CD8-positive, alpha-beta T cell (primary cell): ENCODE measurements at regions of chr3 and their contacts with region 1.

Region 1: DNA sequence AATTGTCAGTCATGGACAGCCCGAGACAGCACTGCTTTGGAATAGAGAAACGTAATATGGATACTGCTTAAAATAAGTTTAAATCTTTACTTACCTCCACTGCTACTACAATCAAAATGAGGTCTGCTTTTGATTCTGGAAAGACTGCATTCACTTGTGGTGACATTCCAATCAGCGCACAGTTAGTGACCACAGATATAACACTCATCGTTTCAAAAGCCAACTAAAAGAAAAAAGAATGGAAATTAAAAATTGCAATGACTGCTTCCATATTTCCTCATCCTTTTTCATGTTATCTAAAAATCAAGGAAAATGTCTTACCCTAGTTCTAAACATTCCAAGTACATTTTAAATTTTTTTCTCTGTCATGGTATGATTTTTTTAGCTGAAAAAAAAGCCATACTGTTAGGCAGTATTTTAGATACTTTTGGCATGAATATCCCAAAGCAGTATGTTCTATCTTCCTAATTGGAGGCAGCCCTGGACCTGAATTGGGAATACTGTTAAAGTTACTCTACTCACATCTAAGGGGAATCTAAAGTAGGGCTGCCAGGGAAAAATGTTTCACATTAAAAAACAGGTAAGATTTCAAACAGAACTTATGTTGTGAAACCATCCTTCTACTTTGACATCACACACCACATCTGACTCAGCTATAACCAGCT is 72.1 kb downstream of the ANO10 start:
- DNase-seq: no peak
- ATAC-seq: no peak
- H3K4me3 ChIP-seq: no peak overlapping the region
- H3K4me3 Mint-ChIP-seq: no peak overlapping the region
- H3K27ac ChIP-seq: no peak overlapping the region
- H3K27ac Mint-ChIP-seq: no peak overlapping the region
- H3K4me1 ChIP-seq: no peaks in the 10 kb centered on the region
- H3K4me1 Mint-ChIP-seq: no peaks in the 10 kb centered on the region
- H3K27me3 ChIP-seq: no peaks in the 10 kb centered on the region
- H3K27me3 Mint-ChIP-seq: no peaks in the 10 kb centered on the region
- CTCF ChIP-seq: no peak

Region 2: DNA sequence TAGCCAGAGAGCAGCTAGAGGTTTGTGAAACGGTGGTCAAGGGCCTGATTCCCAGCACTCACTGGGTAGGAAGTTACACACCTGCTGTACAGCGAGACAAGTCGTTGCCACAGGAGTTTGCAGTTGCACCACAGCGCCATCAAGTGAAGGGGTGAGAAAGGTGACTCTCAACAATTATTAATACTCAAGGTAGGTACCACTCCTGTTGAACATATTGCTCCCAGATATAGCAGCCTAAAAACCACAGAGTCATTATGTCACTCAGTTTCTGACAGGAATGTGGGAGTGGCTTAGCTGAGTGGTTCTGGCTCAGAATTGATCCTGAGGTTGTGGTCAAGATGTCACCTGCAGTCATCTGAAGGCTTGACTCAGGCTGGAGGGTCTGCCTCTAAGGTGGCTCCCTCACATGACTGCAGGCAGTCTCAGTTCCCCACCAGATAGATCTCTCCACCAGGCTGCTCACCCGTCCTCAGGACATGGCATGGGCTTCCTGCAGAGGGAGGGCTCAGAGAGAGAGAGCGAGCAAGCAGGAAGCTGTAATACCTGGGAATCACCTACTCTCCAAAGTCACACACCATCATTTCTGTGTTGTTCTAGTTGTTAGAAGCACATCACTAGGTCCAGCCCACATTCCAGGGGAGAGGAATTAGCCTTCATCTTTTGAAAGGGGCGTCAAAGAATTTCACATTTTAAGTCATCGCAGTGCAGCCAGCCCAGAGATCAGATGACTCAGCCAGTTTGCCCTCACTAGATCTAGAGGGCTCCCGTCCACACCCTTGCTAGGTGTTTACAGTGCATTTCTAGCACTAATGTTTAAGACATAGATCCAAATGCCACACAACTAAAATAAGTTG is 89.1 kb after region 1 on chr3:
- CTCF ChIA-PET with region 1: interaction called, 3 read pairs
- POLR2A ChIA-PET with region 1: no interaction called
- intact Hi-C with region 1: loop called (anchors 1 to 5 kb)
- DNase-seq: peak in 5 of 9 experiments; percentile 25 to 56 (median 46)
- ATAC-seq: peak; percentile 42
- H3K4me3 ChIP-seq: no peak overlapping the region
- H3K4me3 Mint-ChIP-seq: no peak overlapping the region
- H3K27ac ChIP-seq: no peak overlapping the region
- H3K27ac Mint-ChIP-seq: no peak overlapping the region
- H3K4me1 ChIP-seq: no peaks in the 10 kb centered on the region
- H3K4me1 Mint-ChIP-seq: no peaks in the 10 kb centered on the region
- H3K27me3 ChIP-seq: peaks cover 0 to 1% of the 10 kb centered on the region in 2 experiments
- H3K27me3 Mint-ChIP-seq: peaks cover 7% of the 10 kb centered on the region
- CTCF ChIP-seq: no peak

Region 3: DNA sequence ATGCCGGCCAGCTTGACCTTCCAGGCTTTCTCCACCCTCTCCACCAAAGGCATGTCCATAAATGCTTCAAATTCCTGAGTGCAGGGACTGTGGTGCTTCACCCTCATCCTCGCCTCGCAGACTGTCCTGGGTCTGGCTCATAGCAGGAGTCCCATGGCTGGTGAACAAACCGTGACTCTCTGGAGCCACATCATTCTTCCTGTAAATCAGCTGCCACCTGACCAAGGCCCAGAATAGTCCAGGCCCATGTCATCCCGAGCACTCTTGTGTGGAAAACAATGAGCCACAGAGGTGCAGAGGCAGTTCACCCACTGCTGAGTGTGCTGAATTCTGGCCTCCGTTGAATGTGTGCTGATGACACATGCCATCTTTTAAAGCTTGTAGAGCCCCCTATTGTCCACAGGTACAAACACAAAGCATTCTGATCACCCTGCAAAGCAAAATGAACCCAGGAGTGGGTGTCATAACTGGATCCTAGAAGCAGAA is 209.6 kb after region 1 on chr3:
- CTCF ChIA-PET with region 1: interaction called, 16 read pairs
- POLR2A ChIA-PET with region 1: interaction called, 3 read pairs
- intact Hi-C with region 1: loop called (anchors 1 to 5 kb)
- DNase-seq: peak in 2 of 9 experiments; percentile 25 to 37
- ATAC-seq: peak; percentile 43
- H3K4me3 ChIP-seq: no peak overlapping the region
- H3K4me3 Mint-ChIP-seq: no peak overlapping the region
- H3K27ac ChIP-seq: no peak overlapping the region
- H3K27ac Mint-ChIP-seq: no peak overlapping the region
- H3K4me1 ChIP-seq: peaks cover 40% of the 10 kb centered on the region
- H3K4me1 Mint-ChIP-seq: peaks cover 52% of the 10 kb centered on the region
- H3K27me3 ChIP-seq: no peaks in the 10 kb centered on the region
- H3K27me3 Mint-ChIP-seq: no peaks in the 10 kb centered on the region
- CTCF ChIP-seq: no peak

Region 4: DNA sequence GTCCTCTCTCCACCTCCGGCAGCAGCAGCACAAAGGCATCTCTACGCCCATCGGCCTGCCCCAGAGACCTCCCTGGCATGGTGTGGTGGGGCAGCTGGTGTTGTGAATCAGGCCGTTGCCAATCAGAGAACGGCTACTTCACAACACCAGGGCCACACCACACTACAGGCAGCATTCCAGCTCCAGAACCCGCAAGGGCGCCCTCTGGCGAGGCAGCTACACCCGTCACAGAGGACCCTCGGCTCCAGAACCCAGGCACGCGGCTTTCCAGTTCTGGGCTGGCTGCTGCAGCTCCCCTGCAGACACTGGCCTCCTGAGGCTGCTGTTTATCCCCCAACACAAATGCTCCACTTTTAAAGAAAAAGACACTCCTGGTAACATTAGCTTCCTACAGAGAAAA is 564.4 kb after region 1 on chr3:
- CTCF ChIA-PET with region 1: no interaction called
- POLR2A ChIA-PET with region 1: no interaction called
- intact Hi-C with region 1: loop called in 1 of 2 experiments (anchors 5 kb)
- DNase-seq: peak in 6 of 9 experiments; percentile 9 to 53 (median 28)
- ATAC-seq: no peak
- H3K4me3 ChIP-seq: no peak overlapping the region
- H3K4me3 Mint-ChIP-seq: no peak overlapping the region
- H3K27ac ChIP-seq: no peak overlapping the region
- H3K27ac Mint-ChIP-seq: no peak overlapping the region
- H3K4me1 ChIP-seq: no peaks in the 10 kb centered on the region
- H3K4me1 Mint-ChIP-seq: no peaks in the 10 kb centered on the region
- H3K27me3 ChIP-seq: no peaks in the 10 kb centered on the region
- H3K27me3 Mint-ChIP-seq: peaks cover 15% of the 10 kb centered on the region
- CTCF ChIP-seq: no peak